AG04449 (cell line): ENCODE measurements at regions of chr16 and their contacts with region 1.

Region 1: GRCh38 chr16:75110637-75111513 is 5.7 kb downstream of the LDHD start:
- DNase-seq: peak; percentile 55
- H3K4me3 ChIP-seq: peak overlapping the region; percentile 42
- CTCF ChIP-seq: peak; percentile 96

Region 2: DNA sequence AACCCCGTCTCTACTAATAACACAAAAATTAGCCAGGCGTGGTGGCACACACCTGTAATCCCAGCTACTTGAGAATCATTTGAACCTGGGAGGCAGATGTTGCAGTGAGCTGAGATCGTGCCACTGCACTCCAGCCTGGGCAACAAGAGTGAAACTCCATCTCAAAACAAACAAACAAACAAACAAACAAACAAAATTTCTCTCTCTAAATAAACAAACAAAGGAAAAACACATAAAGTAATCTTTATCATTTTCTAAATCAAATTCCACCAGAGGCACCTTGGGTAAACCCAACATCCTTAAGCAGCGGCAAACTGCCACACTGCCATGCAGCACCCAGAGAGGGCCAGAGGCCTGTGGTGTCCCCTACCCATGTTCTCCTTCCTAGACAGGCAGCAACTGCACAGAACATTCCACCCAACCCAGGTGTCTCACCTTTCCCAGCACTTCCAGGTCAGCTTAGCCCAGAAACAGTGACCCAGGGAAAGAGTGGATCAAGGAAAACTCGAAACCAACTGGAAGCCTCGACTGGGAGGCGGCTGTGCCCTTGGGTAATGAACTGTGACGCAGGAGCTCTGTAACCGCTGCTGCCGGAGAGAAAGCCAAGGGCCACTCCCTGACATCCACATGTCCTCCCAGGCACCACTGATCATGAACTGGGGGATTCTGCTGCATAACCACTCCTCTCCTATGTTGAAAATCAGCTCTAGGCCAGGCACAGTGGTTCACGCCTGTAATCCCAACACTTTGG is 160.5 kb before region 1 on chr16:
- CTCF ChIA-PET with region 1: interaction called, 14 read pairs
- POLR2A ChIA-PET with region 1: no interaction called
- DNase-seq: no peak
- H3K4me3 ChIP-seq: no peak overlapping the region
- CTCF ChIP-seq: no peak

Region 3: DNA sequence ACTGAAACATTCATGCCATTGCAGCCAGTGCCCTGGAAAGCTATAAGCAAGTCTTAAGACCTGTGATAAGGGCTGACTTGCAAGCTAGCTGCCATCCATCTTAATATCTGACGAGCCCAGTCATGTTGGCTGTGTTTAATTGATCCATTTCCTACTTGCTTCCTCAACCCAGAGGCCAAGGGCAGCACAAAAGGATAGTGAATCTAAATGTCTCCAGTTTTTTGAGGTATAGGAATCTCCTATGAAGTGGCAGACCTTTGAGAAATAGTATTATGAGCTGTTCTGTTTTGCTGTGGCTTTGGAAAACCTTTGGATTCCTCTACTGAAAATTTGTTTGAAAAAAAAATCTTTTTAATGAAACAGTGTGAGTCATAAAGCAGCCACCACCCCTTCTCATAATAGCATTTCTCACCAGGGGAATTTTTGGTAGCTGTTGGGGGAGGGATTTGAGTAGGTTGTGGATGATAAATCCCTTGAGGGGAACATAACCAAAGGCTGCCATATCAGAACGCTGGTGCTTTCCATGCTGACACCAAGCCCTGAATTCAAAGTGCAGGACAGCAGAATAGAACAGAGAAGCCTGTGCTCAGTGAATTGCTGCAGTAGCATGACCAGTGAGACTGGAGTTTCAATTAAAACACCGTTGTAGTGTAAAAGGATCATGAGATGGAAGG is 99.1 kb before region 1 on chr16:
- CTCF ChIA-PET with region 1: interaction called, 133 read pairs
- POLR2A ChIA-PET with region 1: no interaction called
- DNase-seq: peak; percentile 67
- H3K4me3 ChIP-seq: peak overlapping the region; percentile 26
- CTCF ChIP-seq: no peak

Region 4: GRCh38 chr16:75043175-75043895 is 67.5 kb before region 1 on chr16:
- CTCF ChIA-PET with region 1: interaction called, 10 read pairs
- POLR2A ChIA-PET with region 1: no interaction called
- DNase-seq: no peak
- H3K4me3 ChIP-seq: no peak overlapping the region
- CTCF ChIP-seq: no peak

Region 5: GRCh38 chr16:75099756-75100602 is 10.9 kb before region 1 on chr16:
- CTCF ChIA-PET with region 1: interaction called, 73 read pairs
- POLR2A ChIA-PET with region 1: no interaction called
- DNase-seq: no peak
- H3K4me3 ChIP-seq: no peak overlapping the region
- CTCF ChIP-seq: no peak

Region 6: GRCh38 chr16:75129491-75130149 is 18.7 kb after region 1 on chr16:
- CTCF ChIA-PET with region 1: interaction called, 50 read pairs
- POLR2A ChIA-PET with region 1: no interaction called
- DNase-seq: no peak
- H3K4me3 ChIP-seq: no peak overlapping the region
- CTCF ChIP-seq: no peak

Region 7: DNA sequence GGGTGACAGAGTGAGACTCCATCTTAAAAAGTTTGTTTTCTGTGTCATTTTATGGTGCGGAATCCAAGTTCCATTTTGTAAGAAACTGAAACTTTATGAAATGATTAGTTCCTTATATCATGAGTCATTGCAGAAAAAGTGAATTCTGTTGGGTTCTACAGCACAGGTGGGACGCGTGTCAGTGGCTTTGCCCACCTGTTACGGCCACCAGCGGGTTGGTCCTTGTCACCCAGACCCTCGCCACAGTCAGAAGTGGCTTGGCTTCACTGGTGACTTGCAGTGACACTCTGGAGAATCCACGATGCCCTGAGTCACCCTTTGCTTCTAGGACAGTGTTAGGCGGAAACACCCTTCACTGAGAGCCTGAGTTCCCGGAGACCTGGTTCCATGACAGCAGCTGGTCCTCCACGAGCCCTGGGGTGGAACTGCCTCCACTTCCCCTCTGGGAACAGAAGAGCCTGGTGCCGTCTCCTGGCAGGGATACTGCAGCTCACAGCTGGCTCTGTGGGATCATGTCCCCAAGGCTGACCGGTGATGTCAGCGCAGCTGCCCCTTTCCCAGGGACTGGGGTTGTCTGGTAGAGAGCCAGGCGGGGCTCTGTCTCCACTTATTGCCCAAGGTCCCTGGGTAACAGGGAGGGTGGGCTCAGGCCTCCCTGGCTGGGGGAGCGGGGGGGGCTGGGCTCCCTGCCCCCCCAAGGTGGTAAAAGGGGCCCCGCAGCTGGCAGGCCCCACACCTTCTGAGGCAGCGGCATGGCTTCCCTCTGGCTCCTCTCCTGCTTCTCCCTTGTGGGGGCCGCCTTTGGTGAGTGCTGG is 107.6 kb after region 1 on chr16 and contains the start of gene CTRB1:
- CTCF ChIA-PET with region 1: no interaction called
- POLR2A ChIA-PET with region 1: no interaction called
- DNase-seq: no peak
- H3K4me3 ChIP-seq: no peak within 1 kb of the TSS
- CTCF ChIP-seq: no peak